ENCODE measurements at regions of chr15 and their contacts with region 1.

Region 1: GRCh38 chr15:74956648-74957300 is at the start of gene RPP25:
- DNase-seq: peak; percentile 85 to 89
- H3K4me3 ChIP-seq: peak within 1 kb of the TSS; percentile 60 to 83
- H3K27ac ChIP-seq: peak within 1 kb of the TSS; percentile 77 to 93
- H3K4me1 ChIP-seq: peaks cover 4 to 52% (median 37%) of the 10 kb centered on the region in 4 donors
- H3K27me3 ChIP-seq: no peaks in the 10 kb centered on the region
- CTCF ChIP-seq: no peak

Region 2: DNA sequence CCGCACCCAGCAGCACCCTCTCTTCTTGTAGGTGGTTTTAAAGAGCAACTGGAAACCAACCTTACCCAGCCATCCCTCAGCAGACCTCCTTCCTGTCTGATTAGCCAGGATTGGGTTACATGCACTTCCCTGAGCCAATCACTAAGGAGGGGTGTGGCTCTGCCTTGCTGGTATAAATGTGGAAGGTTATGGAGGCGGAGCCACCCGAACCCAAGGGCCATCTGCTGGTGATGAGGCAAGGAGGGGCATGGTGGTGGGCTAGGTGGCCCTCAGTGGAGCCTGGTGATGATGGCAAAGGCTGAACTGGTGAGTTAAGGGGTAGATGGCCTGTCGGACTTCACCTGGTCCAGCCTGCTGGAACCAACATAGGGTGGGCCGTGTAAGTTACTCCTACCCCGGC is 680.8 kb before region 1 on chr15:
- intact Hi-C with region 1: no loop called
- DNase-seq: no peak
- H3K4me3 ChIP-seq: no peak overlapping the region
- H3K27ac ChIP-seq: no peak overlapping the region
- H3K4me1 ChIP-seq: peaks cover 0 to 2% (median 0%) of the 10 kb centered on the region in 4 donors
- H3K27me3 ChIP-seq: peaks cover 0 to 60% of the 10 kb centered on the region in 2 donors
- CTCF ChIP-seq: no peak

Region 3: DNA sequence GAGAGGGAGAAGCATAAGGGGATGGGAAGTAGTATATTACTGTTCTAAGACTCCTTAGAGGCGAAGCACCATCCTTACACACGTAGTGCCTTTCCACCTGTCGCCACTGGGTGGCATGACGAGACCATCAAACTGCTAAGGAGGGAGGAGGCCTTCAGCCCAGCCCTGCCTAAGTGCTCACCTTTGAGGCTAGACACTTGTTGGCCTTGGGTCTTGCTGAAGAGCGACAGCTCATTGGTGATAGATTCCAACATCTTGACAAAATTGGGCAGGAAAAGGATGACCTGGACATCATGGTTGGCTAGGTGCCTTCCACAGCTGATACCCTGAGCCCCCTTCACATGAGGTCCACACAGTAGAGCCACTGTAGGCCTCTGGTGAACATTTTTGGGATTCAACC is 321.5 kb before region 1 on chr15:
- intact Hi-C with region 1: loop called (anchors 10 kb)
- DNase-seq: peak in 1 of 2 donors; percentile 57
- H3K4me3 ChIP-seq: no peak overlapping the region
- H3K27ac ChIP-seq: no peak overlapping the region
- H3K4me1 ChIP-seq: peaks cover 0 to 3% (median 0%) of the 10 kb centered on the region in 4 donors
- H3K27me3 ChIP-seq: no peaks in the 10 kb centered on the region
- CTCF ChIP-seq: peak; percentile 81 to 83

Region 4: GRCh38 chr15:74913041-74913440 is 43.7 kb before region 1 on chr15:
- intact Hi-C with region 1: loop called (anchors 2 kb)
- DNase-seq: no peak
- H3K4me3 ChIP-seq: no peak overlapping the region
- H3K27ac ChIP-seq: no peak overlapping the region
- H3K4me1 ChIP-seq: no peaks in the 10 kb centered on the region
- H3K27me3 ChIP-seq: no peaks in the 10 kb centered on the region
- CTCF ChIP-seq: no peak

Region 5: GRCh38 chr15:75029378-75030022 is 72.7 kb after region 1 on chr15:
- intact Hi-C with region 1: loop called (anchors 5 kb)
- DNase-seq: peak; percentile 97
- H3K4me3 ChIP-seq: peak overlapping the region; percentile 14 to 40
- H3K27ac ChIP-seq: peak overlapping the region; percentile 78 to 84
- H3K4me1 ChIP-seq: peaks cover 8 to 51% (median 41%) of the 10 kb centered on the region in 4 donors
- H3K27me3 ChIP-seq: no peaks in the 10 kb centered on the region
- CTCF ChIP-seq: peak; percentile 82 to 99

Region 6: DNA sequence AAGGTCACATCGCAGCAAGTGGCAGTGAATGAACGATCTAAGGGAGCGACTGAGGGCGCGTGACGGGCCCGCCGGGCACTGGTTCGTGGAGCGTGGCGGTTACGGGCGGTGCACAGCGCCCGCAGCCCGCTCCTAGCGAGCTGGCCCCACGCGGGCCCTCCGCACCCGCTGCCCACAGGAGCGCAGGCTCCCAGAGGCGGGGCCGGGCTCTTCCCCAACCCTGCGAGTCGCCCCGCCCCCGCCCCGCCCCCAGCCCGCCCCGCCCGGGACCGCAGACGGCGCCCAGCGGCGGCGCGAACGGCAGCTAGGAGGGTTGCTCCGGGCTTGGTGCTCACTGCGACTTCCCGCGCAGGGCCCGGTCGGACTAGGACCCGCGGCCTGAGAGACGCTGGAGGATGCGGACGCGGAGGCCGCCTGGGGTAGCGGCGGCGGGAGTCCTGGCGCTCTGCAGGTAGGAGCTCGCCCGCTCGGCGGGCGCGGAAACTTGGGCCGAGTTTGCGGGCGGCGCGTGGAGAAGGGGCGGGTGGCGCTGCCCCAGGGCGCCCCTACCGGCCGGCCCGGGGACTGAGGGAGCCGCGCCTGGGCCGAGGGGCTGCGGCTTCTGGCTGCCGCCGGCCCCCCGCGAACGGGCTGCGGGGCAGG is 245.0 kb after region 1 on chr15 and contains the start of gene C15orf39:
- intact Hi-C with region 1: loop called (anchors 2 kb)
- DNase-seq: peak; percentile 48 to 85
- H3K4me3 ChIP-seq: peak within 1 kb of the TSS; percentile 86 to 97
- H3K27ac ChIP-seq: peak within 1 kb of the TSS; percentile 97 to 100
- H3K4me1 ChIP-seq: peaks cover 0 to 43% (median 37%) of the 10 kb centered on the region in 4 donors
- H3K27me3 ChIP-seq: no peaks in the 10 kb centered on the region
- CTCF ChIP-seq: peak; percentile 89 to 98

Measured in tibial artery (tissue), 4 donors.